CD4-positive, alpha-beta memory T cell (primary cell): ENCODE measurements at regions of chr14 and their contacts with region 1.

Region 1: GRCh38 chr14:21103710-21104447 is 3.0 kb downstream of the TMEM253 start:
- DNase-seq: peak; percentile 92 to 95 (median 95)
- H3K4me3 ChIP-seq: peak overlapping the region; percentile 96
- H3K4me3 Mint-ChIP-seq: peak overlapping the region; percentile 85 to 94 (median 90)
- H3K27ac ChIP-seq: peak overlapping the region; percentile 90
- H3K27ac Mint-ChIP-seq: peak overlapping the region; percentile 91 to 99 (median 97)
- H3K4me1 ChIP-seq: peaks cover 29% of the 10 kb centered on the region
- H3K4me1 Mint-ChIP-seq: peaks cover 15 to 40% (median 23%) of the 10 kb centered on the region in 4 donors
- H3K27me3 ChIP-seq: no peaks in the 10 kb centered on the region
- H3K27me3 Mint-ChIP-seq: no peaks in the 10 kb centered on the region

Region 2: GRCh38 chr14:20714593-20715250 is 389.2 kb before region 1 on chr14:
- CTCF ChIA-PET with region 1: no interaction called
- POLR2A ChIA-PET with region 1: no interaction called
- intact Hi-C with region 1: no loop called
- DNase-seq: no peak
- H3K4me3 ChIP-seq: no peak overlapping the region
- H3K4me3 Mint-ChIP-seq: no peak overlapping the region
- H3K27ac ChIP-seq: no peak overlapping the region
- H3K27ac Mint-ChIP-seq: no peak overlapping the region
- H3K4me1 ChIP-seq: no peaks in the 10 kb centered on the region
- H3K4me1 Mint-ChIP-seq: no peaks in the 10 kb centered on the region
- H3K27me3 ChIP-seq: no peaks in the 10 kb centered on the region
- H3K27me3 Mint-ChIP-seq: peaks cover 11 to 13% of the 10 kb centered on the region in 2 donors

Region 3: GRCh38 chr14:20848316-20848954 is 255.4 kb before region 1 on chr14:
- CTCF ChIA-PET with region 1: no interaction called
- POLR2A ChIA-PET with region 1: no interaction called
- intact Hi-C with region 1: no loop called
- DNase-seq: no peak
- H3K4me3 ChIP-seq: no peak overlapping the region
- H3K4me3 Mint-ChIP-seq: no peak overlapping the region
- H3K27ac ChIP-seq: no peak overlapping the region
- H3K27ac Mint-ChIP-seq: no peak overlapping the region
- H3K4me1 ChIP-seq: no peaks in the 10 kb centered on the region
- H3K4me1 Mint-ChIP-seq: no peaks in the 10 kb centered on the region
- H3K27me3 ChIP-seq: no peaks in the 10 kb centered on the region
- H3K27me3 Mint-ChIP-seq: peaks cover 3 to 5% of the 10 kb centered on the region in 2 donors

Region 4: GRCh38 chr14:20989572-20990551 is 114.0 kb before region 1 on chr14 and contains the start of gene METTL17:
- CTCF ChIA-PET with region 1: interaction called, 4 read pairs
- POLR2A ChIA-PET with region 1: interaction called, 3 read pairs
- intact Hi-C with region 1: loop called (anchors 1 kb)
- DNase-seq: peak; percentile 82 to 90 (median 85)
- H3K4me3 ChIP-seq: peak within 1 kb of the TSS; percentile 79 to 93
- H3K4me3 Mint-ChIP-seq: peak within 1 kb of the TSS; percentile 90 to 97 (median 96)
- H3K27ac ChIP-seq: peak within 1 kb of the TSS; percentile 73
- H3K27ac Mint-ChIP-seq: peak within 1 kb of the TSS; percentile 87 to 98 (median 96)
- H3K4me1 ChIP-seq: peaks cover 24% of the 10 kb centered on the region
- H3K4me1 Mint-ChIP-seq: peaks cover 15 to 39% (median 22%) of the 10 kb centered on the region in 4 donors
- H3K27me3 ChIP-seq: no peaks in the 10 kb centered on the region
- H3K27me3 Mint-ChIP-seq: no peaks in the 10 kb centered on the region
- total RNA-seq, gene METTL17: 119 to 125 TPM

Region 5: DNA sequence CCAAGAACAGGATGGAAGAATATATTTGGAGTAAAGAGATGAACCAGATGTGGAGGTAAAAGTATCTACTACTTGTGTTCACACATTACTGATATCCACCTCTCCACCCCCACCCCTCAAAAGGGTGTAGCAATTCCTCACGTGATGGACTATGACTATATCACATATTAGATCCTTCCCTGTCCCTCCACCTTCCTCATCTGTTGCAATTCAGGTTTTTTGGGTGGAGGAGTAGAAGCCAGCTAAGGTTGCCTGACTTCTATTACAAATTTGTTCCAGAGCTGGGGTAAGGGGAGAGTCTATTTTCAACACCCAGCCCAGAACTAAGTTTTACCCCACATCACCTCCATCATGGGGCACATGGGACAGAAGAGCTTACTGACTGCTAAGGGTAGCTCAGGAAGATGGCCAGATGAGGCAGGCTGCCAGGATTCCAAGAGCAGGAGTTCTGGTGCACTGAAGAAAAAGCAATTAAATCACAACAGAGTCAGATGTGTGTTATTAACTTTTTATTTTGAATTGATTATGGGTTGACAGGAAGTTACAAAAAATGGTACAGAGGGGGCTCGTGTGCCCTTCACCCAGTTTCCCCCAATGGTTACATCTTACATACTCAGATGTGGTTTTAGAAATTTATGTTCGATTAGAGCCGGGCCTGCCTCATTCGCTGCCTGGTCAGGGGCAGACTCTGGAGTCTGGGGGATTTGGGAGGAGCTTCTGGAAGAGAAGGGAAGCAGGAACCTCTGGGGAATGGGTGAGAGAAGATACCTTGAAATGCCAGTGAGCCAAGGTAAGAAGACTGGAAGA is 71.3 kb before region 1 on chr14:
- CTCF ChIA-PET with region 1: interaction called, 10 read pairs
- POLR2A ChIA-PET with region 1: no interaction called
- intact Hi-C with region 1: no loop called
- DNase-seq: no peak
- H3K4me3 ChIP-seq: no peak overlapping the region
- H3K4me3 Mint-ChIP-seq: no peak overlapping the region
- H3K27ac ChIP-seq: no peak overlapping the region
- H3K27ac Mint-ChIP-seq: no peak overlapping the region
- H3K4me1 ChIP-seq: no peaks in the 10 kb centered on the region
- H3K4me1 Mint-ChIP-seq: no peaks in the 10 kb centered on the region
- H3K27me3 ChIP-seq: no peaks in the 10 kb centered on the region
- H3K27me3 Mint-ChIP-seq: peaks cover 1 to 3% of the 10 kb centered on the region in 2 donors

Region 6: GRCh38 chr14:21039585-21040369 is 64.1 kb before region 1 on chr14:
- CTCF ChIA-PET with region 1: interaction called, 15 read pairs
- POLR2A ChIA-PET with region 1: interaction called, 3 read pairs
- intact Hi-C with region 1: no loop called
- DNase-seq: peak in 4 of 5 donors; percentile 40 to 51 (median 44)
- H3K4me3 ChIP-seq: no peak overlapping the region
- H3K4me3 Mint-ChIP-seq: no peak overlapping the region
- H3K27ac ChIP-seq: no peak overlapping the region
- H3K27ac Mint-ChIP-seq: peak overlapping the region in 2 of 7 donors; percentile 13 to 39
- H3K4me1 ChIP-seq: peaks cover 16% of the 10 kb centered on the region
- H3K4me1 Mint-ChIP-seq: peaks cover 9 to 35% (median 15%) of the 10 kb centered on the region in 4 donors
- H3K27me3 ChIP-seq: no peaks in the 10 kb centered on the region
- H3K27me3 Mint-ChIP-seq: no peaks in the 10 kb centered on the region

Region 7: DNA sequence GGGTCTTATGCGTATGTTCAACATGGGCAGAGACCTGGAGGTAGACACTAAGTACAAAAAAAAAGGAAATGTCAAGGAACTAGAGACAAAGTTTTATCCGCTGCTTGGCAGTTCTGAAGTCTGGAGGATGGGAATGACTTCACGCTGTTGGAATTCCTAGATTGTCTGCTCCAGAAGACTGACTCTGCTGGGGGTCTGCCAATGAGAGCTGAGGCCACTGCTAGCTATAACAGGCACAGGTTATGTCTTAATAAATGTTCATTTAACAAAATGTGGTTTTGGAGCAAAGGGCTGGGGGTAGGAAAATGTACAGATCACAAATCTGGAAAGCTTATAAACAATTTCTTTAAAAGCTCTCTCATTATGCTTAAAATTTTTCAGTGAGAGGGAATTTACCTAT is 40.4 kb before region 1 on chr14:
- CTCF ChIA-PET with region 1: interaction called, 118 read pairs
- POLR2A ChIA-PET with region 1: interaction called, 26 read pairs
- intact Hi-C with region 1: loop called (anchors 1 kb)
- DNase-seq: no peak
- H3K4me3 ChIP-seq: no peak overlapping the region
- H3K4me3 Mint-ChIP-seq: no peak overlapping the region
- H3K27ac ChIP-seq: no peak overlapping the region
- H3K27ac Mint-ChIP-seq: no peak overlapping the region
- H3K4me1 ChIP-seq: peaks cover 2% of the 10 kb centered on the region
- H3K4me1 Mint-ChIP-seq: peaks cover 1 to 3% (median 2%) of the 10 kb centered on the region in 4 donors
- H3K27me3 ChIP-seq: peaks cover 10% of the 10 kb centered on the region
- H3K27me3 Mint-ChIP-seq: peaks cover 36 to 45% of the 10 kb centered on the region in 2 donors

Region 8: GRCh38 chr14:21071225-21072030 is 32.5 kb before region 1 on chr14:
- CTCF ChIA-PET with region 1: interaction called, 118 read pairs
- POLR2A ChIA-PET with region 1: interaction called, 26 read pairs
- intact Hi-C with region 1: loop called (anchors 1 kb)
- DNase-seq: peak in 4 of 5 donors; percentile 23 to 75 (median 32)
- H3K4me3 ChIP-seq: peak overlapping the region in 1 of 2 donors; percentile 42
- H3K4me3 Mint-ChIP-seq: peak overlapping the region; percentile 80 to 90 (median 86)
- H3K27ac ChIP-seq: peak overlapping the region; percentile 25
- H3K27ac Mint-ChIP-seq: peak overlapping the region in 6 of 7 donors; percentile 77 to 88 (median 83)
- H3K4me1 ChIP-seq: peaks cover 35% of the 10 kb centered on the region
- H3K4me1 Mint-ChIP-seq: peaks cover 22 to 41% (median 30%) of the 10 kb centered on the region in 4 donors
- H3K27me3 ChIP-seq: peaks cover 52% of the 10 kb centered on the region
- H3K27me3 Mint-ChIP-seq: peaks cover 29 to 50% of the 10 kb centered on the region in 2 donors

Region 9: GRCh38 chr14:21084988-21085853 is 18.7 kb before region 1 on chr14:
- CTCF ChIA-PET with region 1: interaction called, 80 read pairs
- POLR2A ChIA-PET with region 1: interaction called, 57 read pairs
- intact Hi-C with region 1: loop called (anchors 1 kb)
- DNase-seq: no peak
- H3K4me3 ChIP-seq: no peak overlapping the region
- H3K4me3 Mint-ChIP-seq: peak overlapping the region in 1 of 8 donors; percentile 46
- H3K27ac ChIP-seq: no peak overlapping the region
- H3K27ac Mint-ChIP-seq: peak overlapping the region; percentile 62 to 100 (median 99)
- H3K4me1 ChIP-seq: peaks cover 18% of the 10 kb centered on the region
- H3K4me1 Mint-ChIP-seq: peaks cover 20 to 36% (median 28%) of the 10 kb centered on the region in 4 donors
- H3K27me3 ChIP-seq: no peaks in the 10 kb centered on the region
- H3K27me3 Mint-ChIP-seq: peaks cover 0 to 1% of the 10 kb centered on the region in 2 donors

Region 10: GRCh38 chr14:21476925-21477681 is 373.2 kb after region 1 on chr14 and contains the starts of genes RAB2B and TOX4:
- CTCF ChIA-PET with region 1: no interaction called
- POLR2A ChIA-PET with region 1: no interaction called
- intact Hi-C with region 1: no loop called
- DNase-seq: peak; percentile 98
- H3K4me3 ChIP-seq: peak within 1 kb of the TSS; percentile 69 to 97
- H3K4me3 Mint-ChIP-seq: peak within 1 kb of the TSS; percentile 98 to 100 (median 100)
- H3K27ac ChIP-seq: peak within 1 kb of the TSS; percentile 81
- H3K27ac Mint-ChIP-seq: peak within 1 kb of the TSS; percentile 95 to 100 (median 100)
- H3K4me1 ChIP-seq: peaks cover 27% of the 10 kb centered on the region
- H3K4me1 Mint-ChIP-seq: peaks cover 28 to 63% (median 45%) of the 10 kb centered on the region in 4 donors
- H3K27me3 ChIP-seq: no peaks in the 10 kb centered on the region
- H3K27me3 Mint-ChIP-seq: no peaks in the 10 kb centered on the region
- total RNA-seq, gene RAB2B: 29.3 to 30.4 TPM
- total RNA-seq, gene TOX4: 83.6 to 86.0 TPM